ENCODE measurements at regions of chr5 and their contacts with region 1.

Region 1: GRCh38 chr5:149852641-149853330 is 91.8 kb downstream of the PDE6A start:
- H3K4me3 ChIP-seq: no peak overlapping the region
- H3K27ac ChIP-seq: no peak overlapping the region
- H3K4me1 ChIP-seq: no peaks in the 10 kb centered on the region
- CTCF ChIP-seq: peak; percentile 63

Region 2: GRCh38 chr5:149636851-149637246 is 215.9 kb before region 1 on chr5:
- CTCF ChIA-PET with region 1: interaction called, 21 read pairs
- POLR2A ChIA-PET with region 1: no interaction called
- H3K4me3 ChIP-seq: no peak overlapping the region
- H3K27ac ChIP-seq: no peak overlapping the region
- H3K4me1 ChIP-seq: no peaks in the 10 kb centered on the region
- CTCF ChIP-seq: peak; percentile 95

Region 3: DNA sequence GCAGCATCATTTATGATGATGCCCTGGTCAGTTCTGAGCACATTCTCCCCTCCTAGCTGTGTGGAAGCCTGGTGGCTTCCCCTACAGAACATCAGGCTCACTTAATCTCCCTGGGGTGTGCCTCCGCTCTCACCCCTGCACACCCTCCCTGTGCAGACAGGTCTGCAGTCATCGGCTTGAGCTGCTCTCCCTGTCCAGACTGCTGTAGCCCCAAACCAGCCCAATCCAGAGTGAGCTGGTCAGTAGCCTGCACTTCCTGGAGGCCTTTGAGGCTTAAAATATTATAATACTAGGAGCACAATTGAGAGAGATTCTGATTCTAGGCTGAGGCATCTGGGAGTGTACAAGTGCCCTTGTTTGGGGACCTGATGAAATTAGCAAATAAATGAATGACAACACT is 62.5 kb before region 1 on chr5:
- CTCF ChIA-PET with region 1: no interaction called
- POLR2A ChIA-PET with region 1: no interaction called
- H3K4me3 ChIP-seq: no peak overlapping the region
- H3K27ac ChIP-seq: no peak overlapping the region
- H3K4me1 ChIP-seq: peaks cover 2% of the 10 kb centered on the region; the same call in 1 of the 2 replicates
- CTCF ChIP-seq: no peak

Region 4: GRCh38 chr5:149809931-149810617 is 42.7 kb before region 1 on chr5:
- CTCF ChIA-PET with region 1: no interaction called
- POLR2A ChIA-PET with region 1: no interaction called
- H3K4me3 ChIP-seq: no peak overlapping the region
- H3K27ac ChIP-seq: no peak overlapping the region
- H3K4me1 ChIP-seq: peaks cover 5% of the 10 kb centered on the region; the same call in 1 of the 2 replicates
- CTCF ChIP-seq: no peak

Region 5: GRCh38 chr5:149828161-149828884 is 24.5 kb before region 1 on chr5:
- CTCF ChIA-PET with region 1: interaction called, 355 read pairs
- POLR2A ChIA-PET with region 1: no interaction called
- H3K4me3 ChIP-seq: no peak overlapping the region
- H3K27ac ChIP-seq: no peak overlapping the region
- H3K4me1 ChIP-seq: no peaks in the 10 kb centered on the region
- CTCF ChIP-seq: peak; percentile 65

Region 6: DNA sequence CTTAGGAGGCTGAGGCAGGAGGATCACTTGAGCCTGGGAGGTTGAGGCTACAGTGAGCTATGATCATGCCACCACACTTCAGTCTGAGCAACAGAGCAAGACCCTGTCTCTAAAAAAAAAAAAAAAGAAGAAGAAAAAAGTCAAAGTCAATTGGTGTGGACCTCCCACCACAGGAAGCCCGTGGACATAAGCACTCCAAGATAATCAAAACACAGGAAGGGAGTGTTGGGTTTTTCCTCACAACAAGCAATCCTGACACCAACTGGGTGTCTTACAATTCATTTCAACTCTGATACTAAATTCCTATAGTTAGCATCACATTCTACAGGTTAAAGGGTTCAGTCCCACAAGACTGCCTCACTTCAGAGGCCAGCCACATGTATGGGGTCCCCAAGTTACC is 21.1 kb after region 1 on chr5:
- CTCF ChIA-PET with region 1: interaction called, 55 read pairs
- POLR2A ChIA-PET with region 1: no interaction called
- H3K4me3 ChIP-seq: no peak overlapping the region
- H3K27ac ChIP-seq: no peak overlapping the region
- H3K4me1 ChIP-seq: no peaks in the 10 kb centered on the region
- CTCF ChIP-seq: no peak

Region 7: GRCh38 chr5:149960272-149961185 is 107.7 kb after region 1 on chr5 and contains the start of gene SLC26A2:
- CTCF ChIA-PET with region 1: interaction called, 88 read pairs
- POLR2A ChIA-PET with region 1: interaction called, 8 read pairs
- H3K4me3 ChIP-seq: peak within 1 kb of the TSS; percentile 72
- H3K27ac ChIP-seq: peak within 1 kb of the TSS; percentile 54; the same call in 1 of the 2 replicates
- H3K4me1 ChIP-seq: peaks cover 7% of the 10 kb centered on the region; the same call in 1 of the 2 replicates
- CTCF ChIP-seq: peak; percentile 77

Region 8: DNA sequence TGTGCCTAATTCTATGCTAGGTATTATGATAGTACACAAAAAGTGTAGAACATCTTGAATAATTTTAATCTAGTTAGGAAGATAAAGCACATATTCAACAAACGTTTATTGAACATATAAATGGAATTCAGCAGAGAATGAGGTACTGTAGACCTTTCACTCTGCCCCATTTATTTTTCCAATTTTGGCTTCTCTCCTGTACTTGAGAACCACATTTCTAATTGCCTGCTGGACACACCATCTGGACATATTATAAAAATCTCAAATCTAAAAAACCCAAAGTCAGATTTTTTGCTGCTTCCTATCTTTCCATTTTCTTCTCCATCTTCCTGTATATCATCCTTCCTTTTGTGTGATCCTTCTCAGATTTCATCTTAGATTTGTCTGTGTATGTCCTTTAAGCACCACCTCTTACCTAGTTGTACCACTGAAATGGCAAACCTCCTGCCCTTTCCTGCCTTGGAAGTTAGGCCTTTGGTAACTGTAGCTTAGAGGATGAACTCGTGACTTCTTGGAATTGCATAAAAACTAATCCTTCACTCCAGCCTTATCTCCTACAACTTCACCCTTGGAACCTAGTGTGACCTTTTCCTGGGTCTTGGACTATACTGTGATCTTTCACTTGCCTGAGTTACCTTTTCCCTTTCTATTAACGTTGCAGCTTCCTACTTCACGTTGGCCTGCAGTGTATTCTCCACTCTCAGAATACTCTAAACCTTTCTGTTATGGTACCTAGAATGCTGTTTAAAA is 116.6 kb after region 1 on chr5:
- CTCF ChIA-PET with region 1: interaction called, 31 read pairs
- POLR2A ChIA-PET with region 1: no interaction called
- H3K4me3 ChIP-seq: no peak overlapping the region
- H3K27ac ChIP-seq: no peak overlapping the region
- H3K4me1 ChIP-seq: no peaks in the 10 kb centered on the region
- CTCF ChIP-seq: no peak

Region 9: DNA sequence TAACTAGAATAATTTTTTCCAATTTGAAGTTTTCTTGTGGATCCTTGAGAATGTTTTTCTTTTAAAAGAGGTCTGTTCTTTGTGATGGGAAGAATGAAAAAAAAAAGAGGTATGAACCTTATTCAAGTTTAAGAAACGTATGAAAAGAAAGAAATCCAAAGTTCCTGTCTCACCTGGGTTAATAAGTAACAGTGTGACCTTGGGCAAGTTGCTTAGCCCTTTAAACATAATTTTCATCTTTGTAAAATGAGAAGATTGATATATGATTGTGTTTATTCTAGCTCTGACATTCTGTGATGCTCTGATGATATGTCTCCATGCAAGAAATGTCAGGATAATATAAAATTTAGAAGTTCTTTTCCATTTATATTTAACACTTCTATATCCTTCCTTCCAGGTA is 127.1 kb after region 1 on chr5:
- CTCF ChIA-PET with region 1: interaction called, 12 read pairs
- POLR2A ChIA-PET with region 1: no interaction called
- H3K4me3 ChIP-seq: no peak overlapping the region
- H3K27ac ChIP-seq: no peak overlapping the region
- H3K4me1 ChIP-seq: no peaks in the 10 kb centered on the region
- CTCF ChIP-seq: no peak

Measured in HEK293 (cell line).